IMR-90 (cell line): ENCODE measurements at regions of chr13 and their contacts with region 1.

Region 1: GRCh38 chr13:33554919-33555791 is 262.8 kb upstream of the RFC3 start:
- DNase-seq: no peak
- ATAC-seq: peak; percentile 77
- H3K4me3 ChIP-seq: no peak overlapping the region
- H3K27ac ChIP-seq: peak overlapping the region; percentile 34; the same call in 1 of the 2 replicates
- H3K4me1 ChIP-seq: peaks cover 4% of the 10 kb centered on the region
- H3K27me3 ChIP-seq: no peaks in the 10 kb centered on the region
- CTCF ChIP-seq: no peak
- POLR2A ChIP-seq: no peak
- RAD21 ChIP-seq: no peak

Region 2: DNA sequence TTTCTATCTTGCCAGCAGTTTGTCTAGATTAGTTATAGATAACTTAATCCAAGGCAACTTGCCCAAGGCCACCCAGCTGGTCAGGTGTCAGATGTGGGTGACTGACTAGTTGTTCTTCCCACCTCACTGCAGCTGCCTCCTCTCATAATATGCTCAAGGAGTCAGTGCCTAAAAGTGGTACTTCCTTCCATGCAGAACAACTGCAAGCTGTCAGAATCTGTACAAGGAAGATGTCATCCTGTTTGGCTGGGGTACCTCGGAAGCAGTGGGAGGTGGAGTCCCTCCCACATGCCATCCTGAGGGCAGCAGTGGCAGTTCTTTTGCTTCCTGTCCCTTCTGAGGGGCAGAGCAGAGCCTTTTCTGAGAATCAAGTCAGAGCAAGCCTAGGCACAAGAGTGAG is 69.6 kb after region 1 on chr13:
- CTCF ChIA-PET with region 1: no interaction called
- POLR2A ChIA-PET with region 1: interaction called, 11 read pairs
- dilution Hi-C with region 1: no loop called
- in situ Hi-C with region 1: no loop called
- intact Hi-C with region 1: no loop called
- DNase-seq: no peak
- ATAC-seq: no peak
- H3K4me3 ChIP-seq: no peak overlapping the region
- H3K27ac ChIP-seq: no peak overlapping the region
- H3K4me1 ChIP-seq: no peaks in the 10 kb centered on the region
- H3K27me3 ChIP-seq: no peaks in the 10 kb centered on the region
- CTCF ChIP-seq: no peak
- POLR2A ChIP-seq: no peak
- RAD21 ChIP-seq: no peak

Region 3: DNA sequence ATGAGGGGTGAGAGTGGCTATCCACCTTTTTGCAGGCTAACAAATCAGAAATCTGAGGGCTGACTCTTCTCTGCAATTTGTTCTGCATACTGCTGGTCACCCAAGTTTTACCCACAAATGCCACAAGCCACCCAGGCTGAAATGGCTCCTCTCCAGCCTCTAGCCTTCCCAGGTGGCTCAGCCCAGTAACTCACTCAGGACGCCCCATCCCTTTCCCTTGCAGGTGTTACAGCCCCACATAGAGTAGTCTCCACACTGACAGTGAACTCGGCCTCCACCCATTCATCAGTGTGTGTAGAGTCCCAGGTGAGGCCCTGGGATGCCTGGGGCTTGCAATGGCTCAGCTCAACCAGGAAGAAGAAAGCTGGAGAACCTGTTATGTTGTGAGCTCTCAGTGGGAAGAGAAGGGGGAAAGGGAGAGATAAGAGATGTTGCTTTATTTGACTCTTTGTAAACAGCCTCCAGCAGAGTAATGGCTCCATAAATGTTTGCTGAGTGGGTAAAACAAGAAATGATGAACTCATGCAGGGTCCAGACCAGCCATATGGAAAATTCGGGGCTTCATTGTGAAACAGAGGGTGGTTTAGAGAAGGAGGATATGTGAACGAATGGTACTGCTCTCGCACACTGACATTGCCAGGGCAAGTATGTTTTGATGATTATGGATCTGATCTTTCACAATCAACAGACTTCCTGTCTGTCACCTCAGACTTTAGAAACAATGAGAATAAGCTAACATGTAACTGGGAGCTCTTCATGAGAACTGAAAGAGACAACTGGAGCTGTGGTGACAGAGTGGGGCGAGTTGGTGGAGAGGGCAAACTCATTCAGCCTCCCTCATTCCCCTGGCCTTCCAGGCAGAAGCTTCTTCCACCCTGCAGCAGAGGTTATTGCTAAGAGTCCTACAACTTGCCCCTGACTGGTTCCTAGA is 188.5 kb after region 1 on chr13:
- CTCF ChIA-PET with region 1: no interaction called
- POLR2A ChIA-PET with region 1: no interaction called
- dilution Hi-C with region 1: no loop called
- in situ Hi-C with region 1: no loop called
- intact Hi-C with region 1: no loop called
- DNase-seq: no peak
- ATAC-seq: no peak
- H3K4me3 ChIP-seq: no peak overlapping the region
- H3K27ac ChIP-seq: no peak overlapping the region
- H3K4me1 ChIP-seq: no peaks in the 10 kb centered on the region
- H3K27me3 ChIP-seq: peaks cover 7% of the 10 kb centered on the region
- CTCF ChIP-seq: no peak
- POLR2A ChIP-seq: no peak
- RAD21 ChIP-seq: no peak

Region 4: GRCh38 chr13:35164324-35164932 is 1609.3 kb after region 1 on chr13:
- CTCF ChIA-PET with region 1: no interaction called
- POLR2A ChIA-PET with region 1: no interaction called
- dilution Hi-C with region 1: no loop called
- in situ Hi-C with region 1: loop called (anchors 25 kb)
- intact Hi-C with region 1: loop called (anchors 10 kb)
- DNase-seq: peak; percentile 27
- ATAC-seq: peak; percentile 78
- H3K4me3 ChIP-seq: no peak overlapping the region
- H3K27ac ChIP-seq: no peak overlapping the region
- H3K4me1 ChIP-seq: no peaks in the 10 kb centered on the region
- H3K27me3 ChIP-seq: no peaks in the 10 kb centered on the region
- CTCF ChIP-seq: peak; percentile 61
- POLR2A ChIP-seq: 0 out of 2 replicates have a peak, but pooled peaks have one; percentile 17
- RAD21 ChIP-seq: peak; percentile 70